H1 (cell line): ENCODE measurements at regions of chr6 and their contacts with region 1.

Region 1: DNA sequence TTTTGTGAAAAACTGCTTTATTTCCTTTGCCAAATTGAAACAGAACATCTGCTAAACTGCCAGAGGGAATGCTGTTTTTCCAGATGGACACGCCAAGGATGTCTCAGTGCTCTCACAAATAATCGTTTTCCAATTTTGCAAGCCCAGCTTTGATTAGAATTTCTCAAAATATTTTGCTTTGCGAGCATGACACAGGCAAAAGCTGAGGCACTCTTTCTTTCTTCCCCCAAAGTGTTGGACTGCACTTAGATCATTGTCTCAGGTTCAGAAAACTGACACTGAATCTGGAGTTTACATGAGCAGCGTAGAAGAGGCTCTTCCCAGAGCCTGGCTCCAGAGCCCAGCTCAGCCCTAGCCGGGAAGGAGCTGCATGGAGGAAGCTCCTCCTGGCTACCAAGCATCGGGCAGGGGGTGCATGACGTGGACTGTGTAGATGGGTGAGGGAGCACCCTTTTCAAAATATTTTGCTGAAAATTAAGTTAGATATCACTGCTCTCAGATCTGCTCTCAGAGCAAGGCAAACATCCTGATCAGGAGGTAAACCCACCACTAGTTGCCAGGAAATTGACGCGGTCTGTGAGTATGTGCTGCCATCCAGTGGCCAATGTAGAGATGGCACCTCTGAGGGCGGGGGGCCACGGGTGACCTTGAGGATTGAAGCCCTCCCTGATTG is 107.5 kb downstream of the SLC22A3 start:
- DNase-seq: peak; percentile 49 to 93
- H3K4me3 ChIP-seq: no peak overlapping the region
- H3K27ac ChIP-seq: no peak overlapping the region
- H3K4me1 ChIP-seq: peaks cover 0 to 3% (median 0%) of the 10 kb centered on the region in 4 experiments; a peak in 2 of 7 replicates
- H3K27me3 ChIP-seq: no peaks in the 10 kb centered on the region
- CTCF ChIP-seq: peak; percentile 89 to 98 (median 98)
- EP300 ChIP-seq: no peak
- POLR2A ChIP-seq: no peak
- RAD21 ChIP-seq: peak; percentile 99 to 100

Region 2: GRCh38 chr6:160071800-160072690 is 383.6 kb before region 1 on chr6:
- CTCF ChIA-PET with region 1: interaction called, 15 read pairs
- POLR2A ChIA-PET with region 1: interaction called, 3 read pairs
- DNase-seq: peak in 1 of 2 experiments; percentile 50
- H3K4me3 ChIP-seq: no peak overlapping the region
- H3K27ac ChIP-seq: no peak overlapping the region
- H3K4me1 ChIP-seq: no peaks in the 10 kb centered on the region
- H3K27me3 ChIP-seq: no peaks in the 10 kb centered on the region
- CTCF ChIP-seq: peak; percentile 35 to 54 (median 51)
- EP300 ChIP-seq: no peak
- POLR2A ChIP-seq: no peak
- RAD21 ChIP-seq: peak; percentile 29 to 48; a peak in 3 of 4 replicates

Region 3: DNA sequence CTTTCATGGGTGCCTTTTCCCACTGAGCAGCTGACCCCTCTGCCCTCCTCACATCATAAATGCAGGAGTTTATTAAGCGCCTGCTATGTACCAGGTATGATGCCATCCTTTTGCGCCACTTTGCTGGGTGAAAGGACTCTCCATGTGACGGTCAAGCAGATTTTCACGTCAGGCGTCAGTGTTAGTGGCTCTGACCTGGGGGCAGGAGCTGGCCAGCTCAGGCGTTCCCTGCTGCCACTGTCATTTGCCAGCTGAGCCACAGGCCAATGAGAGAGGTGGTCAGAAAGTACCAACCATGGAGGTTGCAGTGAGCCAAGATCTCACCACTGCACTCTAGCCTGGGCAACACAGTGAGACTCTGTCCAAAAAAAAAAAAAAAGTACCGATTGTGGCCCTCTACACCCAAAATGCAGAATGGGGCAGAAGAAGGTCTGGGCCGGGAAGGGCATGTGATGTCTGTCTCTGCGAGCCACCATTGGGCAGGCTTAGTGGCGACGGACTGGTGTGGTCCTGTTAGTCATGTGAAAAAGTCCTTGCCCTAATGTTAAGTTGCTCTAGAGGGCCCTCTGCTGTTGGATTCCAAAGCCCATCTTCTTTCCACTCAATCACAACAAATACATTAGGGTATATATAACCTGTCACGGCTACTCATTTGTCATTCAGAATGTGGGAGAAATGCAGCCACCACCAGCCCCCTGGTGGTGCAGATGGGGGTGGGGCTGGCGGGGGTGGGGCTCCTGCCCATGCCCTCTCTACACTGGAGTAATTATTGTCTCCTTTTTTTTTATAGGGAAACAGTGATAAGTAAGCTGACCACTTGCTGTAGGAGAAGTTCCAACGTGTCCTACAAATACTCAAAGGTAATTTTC is 352.5 kb before region 1 on chr6:
- CTCF ChIA-PET with region 1: interaction called, 11 read pairs
- POLR2A ChIA-PET with region 1: no interaction called
- DNase-seq: peak in 1 of 2 experiments; percentile 67
- H3K4me3 ChIP-seq: no peak overlapping the region
- H3K27ac ChIP-seq: no peak overlapping the region; the same call in 1 of the 2 replicates
- H3K4me1 ChIP-seq: no peaks in the 10 kb centered on the region; a peak in 1 of 7 replicates
- H3K27me3 ChIP-seq: no peaks in the 10 kb centered on the region
- CTCF ChIP-seq: peak; percentile 8 to 63 (median 57)
- EP300 ChIP-seq: no peak
- POLR2A ChIP-seq: no peak
- RAD21 ChIP-seq: peak; percentile 59 to 65

Region 4: DNA sequence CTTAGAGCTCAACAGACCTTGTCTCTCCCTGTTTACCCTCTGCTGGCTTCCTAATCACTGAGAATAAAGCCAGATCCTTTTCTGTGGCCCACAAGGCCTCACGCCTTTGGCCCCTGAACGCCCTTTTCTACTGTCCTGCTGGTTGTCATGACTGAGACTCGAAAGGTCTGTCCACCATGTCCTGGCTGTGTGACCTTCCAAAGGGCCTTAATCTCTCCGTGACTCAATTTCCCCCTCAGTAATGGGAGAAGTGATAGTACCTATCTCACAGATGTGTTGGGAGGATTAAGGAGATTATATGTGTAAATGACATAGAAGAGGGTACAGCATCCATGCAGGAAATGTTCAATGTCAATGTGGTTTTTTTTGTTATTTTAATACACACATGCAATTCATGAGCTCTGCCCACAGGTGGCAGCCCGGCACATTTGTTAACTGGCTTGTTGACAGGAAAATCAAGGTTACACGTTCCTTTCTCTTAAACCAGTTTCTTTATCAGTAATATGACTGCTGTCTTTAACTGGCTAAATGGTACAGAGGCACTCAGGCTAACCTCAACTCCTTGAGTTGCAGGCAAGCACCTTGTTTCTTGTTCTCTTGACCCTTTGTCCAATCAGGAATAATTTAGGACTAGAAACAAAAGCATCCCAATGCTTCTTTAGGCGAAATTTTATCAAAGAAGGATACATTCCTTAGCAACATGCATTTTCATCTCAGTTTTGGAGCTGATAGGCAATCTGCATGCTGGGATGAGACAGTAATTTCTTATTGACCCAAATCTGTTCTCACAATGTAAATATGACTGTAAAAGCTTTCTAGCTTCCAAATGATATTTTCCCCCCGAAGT is 317.5 kb before region 1 on chr6:
- CTCF ChIA-PET with region 1: interaction called, 35 read pairs
- POLR2A ChIA-PET with region 1: no interaction called
- DNase-seq: peak in 1 of 2 experiments; percentile 71
- H3K4me3 ChIP-seq: no peak overlapping the region
- H3K27ac ChIP-seq: no peak overlapping the region
- H3K4me1 ChIP-seq: peaks cover 2 to 19% (median 3%) of the 10 kb centered on the region in 4 experiments; a peak in 5 of 7 replicates
- H3K27me3 ChIP-seq: no peaks in the 10 kb centered on the region; a peak in 1 of 7 replicates
- CTCF ChIP-seq: peak; percentile 23 to 78 (median 72)
- EP300 ChIP-seq: no peak
- POLR2A ChIP-seq: no peak
- RAD21 ChIP-seq: peak; percentile 81 to 85

Region 5: GRCh38 chr6:160297310-160297709 is 158.4 kb before region 1 on chr6:
- CTCF ChIA-PET with region 1: interaction called, 10 read pairs
- POLR2A ChIA-PET with region 1: no interaction called
- DNase-seq: peak in 1 of 2 experiments; percentile 19
- H3K4me3 ChIP-seq: no peak overlapping the region
- H3K27ac ChIP-seq: no peak overlapping the region
- H3K4me1 ChIP-seq: peaks cover 0 to 9% (median 6%) of the 10 kb centered on the region in 4 experiments; a peak in 4 of 7 replicates
- H3K27me3 ChIP-seq: no peaks in the 10 kb centered on the region
- CTCF ChIP-seq: peak; percentile 71 to 82 (median 76)
- EP300 ChIP-seq: no peak
- POLR2A ChIP-seq: no peak
- RAD21 ChIP-seq: peak; percentile 81 to 89

Region 6: DNA sequence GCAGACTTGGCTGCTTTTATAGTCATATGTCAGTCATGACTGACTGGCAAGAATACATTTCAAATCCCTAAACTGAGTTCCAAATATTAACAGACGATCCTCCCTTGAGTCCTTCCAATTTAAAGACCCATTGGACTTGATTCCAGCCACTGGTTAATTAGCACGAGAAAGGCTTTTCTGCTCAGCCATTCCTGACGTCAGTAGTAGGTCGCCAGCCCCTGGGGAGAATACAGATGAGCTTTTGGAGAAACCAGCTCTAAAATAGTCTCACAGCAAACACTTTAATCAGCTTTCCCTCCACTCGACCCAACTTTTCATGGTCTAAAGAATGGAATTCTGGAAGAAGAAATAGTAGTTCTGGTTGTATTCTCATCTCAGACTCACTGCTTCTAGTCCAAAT is 15.9 kb before region 1 on chr6:
- CTCF ChIA-PET with region 1: interaction called, 17 read pairs
- POLR2A ChIA-PET with region 1: no interaction called
- DNase-seq: no peak
- H3K4me3 ChIP-seq: no peak overlapping the region
- H3K27ac ChIP-seq: no peak overlapping the region
- H3K4me1 ChIP-seq: no peaks in the 10 kb centered on the region; a peak in 1 of 7 replicates
- H3K27me3 ChIP-seq: no peaks in the 10 kb centered on the region; a peak in 1 of 7 replicates
- CTCF ChIP-seq: no peak
- EP300 ChIP-seq: no peak
- POLR2A ChIP-seq: no peak
- RAD21 ChIP-seq: no peak

Region 7: DNA sequence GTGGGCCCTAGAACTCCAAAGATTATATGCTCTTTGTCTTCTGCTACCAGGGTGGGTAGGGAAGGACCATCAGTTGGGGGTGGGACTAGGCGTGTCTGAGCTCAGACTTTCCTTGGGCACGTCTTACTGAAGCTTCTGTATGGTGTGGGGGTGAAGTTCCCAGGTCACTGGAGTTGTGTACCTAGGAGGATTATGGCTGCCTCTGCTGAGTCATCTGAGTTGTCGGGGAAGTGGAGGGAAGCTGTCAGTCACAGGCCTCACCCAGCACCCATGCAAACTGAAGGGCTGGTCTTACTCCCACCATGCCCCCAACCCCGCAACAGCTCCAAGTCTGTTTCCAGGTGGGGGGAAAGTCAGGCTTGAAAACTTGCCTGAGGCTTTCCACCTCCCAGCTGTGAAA is 118.3 kb after region 1 on chr6:
- CTCF ChIA-PET with region 1: no interaction called
- POLR2A ChIA-PET with region 1: no interaction called
- DNase-seq: no peak
- H3K4me3 ChIP-seq: no peak overlapping the region
- H3K27ac ChIP-seq: no peak overlapping the region
- H3K4me1 ChIP-seq: no peaks in the 10 kb centered on the region
- H3K27me3 ChIP-seq: no peaks in the 10 kb centered on the region
- CTCF ChIP-seq: no peak
- EP300 ChIP-seq: no peak
- POLR2A ChIP-seq: no peak
- RAD21 ChIP-seq: no peak